ENCODE measurements at regions of chr11 and their contacts with region 1.

Region 1: GRCh38 chr11:73661035-73661628 is 14.8 kb downstream of the PLEKHB1 start:
- DNase-seq: peak; percentile 71 to 81 (median 76)
- H3K4me3 ChIP-seq: peak overlapping the region in 1 of 2 donors; percentile 34
- H3K4me3 Mint-ChIP-seq: peak overlapping the region in 5 of 8 donors; percentile 41 to 56 (median 51)
- H3K27ac ChIP-seq: no peak overlapping the region
- H3K27ac Mint-ChIP-seq: peak overlapping the region in 1 of 7 donors; percentile 77
- H3K4me1 ChIP-seq: peaks cover 13% of the 10 kb centered on the region
- H3K4me1 Mint-ChIP-seq: peaks cover 7 to 18% (median 10%) of the 10 kb centered on the region in 4 donors
- H3K27me3 ChIP-seq: no peaks in the 10 kb centered on the region
- H3K27me3 Mint-ChIP-seq: no peaks in the 10 kb centered on the region

Region 2: GRCh38 chr11:73307323-73308002 is 353.7 kb before region 1 on chr11:
- CTCF ChIA-PET with region 1: interaction called, 9 read pairs
- POLR2A ChIA-PET with region 1: no interaction called
- intact Hi-C with region 1: loop called (anchors 2 kb)
- DNase-seq: peak; percentile 82 to 87 (median 85)
- H3K4me3 ChIP-seq: peak overlapping the region; percentile 23 to 58
- H3K4me3 Mint-ChIP-seq: peak overlapping the region; percentile 84 to 96 (median 94)
- H3K27ac ChIP-seq: no peak overlapping the region
- H3K27ac Mint-ChIP-seq: peak overlapping the region in 6 of 7 donors; percentile 10 to 88 (median 54)
- H3K4me1 ChIP-seq: peaks cover 8% of the 10 kb centered on the region
- H3K4me1 Mint-ChIP-seq: peaks cover 6 to 18% (median 11%) of the 10 kb centered on the region in 4 donors
- H3K27me3 ChIP-seq: no peaks in the 10 kb centered on the region
- H3K27me3 Mint-ChIP-seq: peaks cover 7 to 19% of the 10 kb centered on the region in 2 donors

Region 3: DNA sequence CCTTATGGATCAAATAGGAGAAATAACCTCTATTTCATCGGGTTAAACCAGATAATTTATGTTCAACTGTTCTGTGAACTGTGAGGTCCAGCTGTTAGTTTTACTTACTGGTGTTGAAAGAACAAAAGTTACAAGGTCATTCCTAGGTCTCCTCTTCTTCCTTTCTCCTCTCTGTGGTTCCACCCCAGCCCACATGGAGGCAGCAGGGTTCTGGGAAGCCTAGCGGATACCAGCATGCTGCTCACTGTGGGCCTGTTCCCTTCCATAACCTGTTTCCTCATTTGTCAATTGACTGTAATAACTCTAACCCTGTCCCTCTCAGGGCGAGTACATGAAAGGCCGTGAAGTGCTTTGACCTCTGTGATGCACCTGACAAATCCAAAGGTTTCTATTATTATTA is 257.1 kb before region 1 on chr11:
- CTCF ChIA-PET with region 1: interaction called, 8 read pairs
- POLR2A ChIA-PET with region 1: no interaction called
- intact Hi-C with region 1: loop called (anchors 2 kb)
- DNase-seq: no peak
- H3K4me3 ChIP-seq: no peak overlapping the region
- H3K4me3 Mint-ChIP-seq: no peak overlapping the region
- H3K27ac ChIP-seq: no peak overlapping the region
- H3K27ac Mint-ChIP-seq: peak overlapping the region in 3 of 7 donors; percentile 52 to 81 (median 74)
- H3K4me1 ChIP-seq: no peaks in the 10 kb centered on the region
- H3K4me1 Mint-ChIP-seq: peaks cover 0 to 6% (median under 1%) of the 10 kb centered on the region in 4 donors
- H3K27me3 ChIP-seq: no peaks in the 10 kb centered on the region
- H3K27me3 Mint-ChIP-seq: no peaks in the 10 kb centered on the region

Region 4: DNA sequence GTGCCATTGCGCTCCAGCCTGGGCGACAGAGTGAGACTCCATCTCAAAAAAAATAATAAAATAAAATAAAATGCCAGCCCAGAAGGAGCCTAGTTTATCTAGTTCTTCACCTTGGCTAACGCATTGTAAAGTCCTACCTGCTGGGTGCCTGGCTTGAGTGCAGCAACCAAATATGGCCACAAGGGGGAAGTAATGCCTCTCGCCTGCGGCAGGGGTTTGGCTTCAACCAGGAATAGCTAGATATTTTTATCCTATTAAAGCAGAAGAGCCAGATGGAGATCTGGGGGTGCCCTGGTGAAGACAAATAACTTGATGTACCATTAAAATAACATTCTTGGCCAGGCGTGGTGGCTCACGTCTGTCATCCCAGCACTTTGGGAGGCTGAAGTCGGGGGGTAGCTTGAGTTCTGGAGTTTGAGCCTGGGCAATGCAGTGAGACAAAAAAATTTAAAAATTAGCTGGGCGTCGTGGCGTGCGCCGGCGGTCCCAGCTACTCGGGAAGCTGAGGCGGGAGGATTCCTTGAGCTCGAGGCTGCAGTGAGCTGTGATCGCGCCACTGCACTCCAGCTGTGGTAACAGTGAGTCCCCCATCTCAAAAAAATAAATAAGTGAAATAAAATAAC is 35.3 kb before region 1 on chr11:
- CTCF ChIA-PET with region 1: interaction called, 320 read pairs
- POLR2A ChIA-PET with region 1: interaction called, 15 read pairs
- intact Hi-C with region 1: loop called (anchors 1 kb)
- DNase-seq: peak; percentile 60 to 70 (median 66)
- H3K4me3 ChIP-seq: no peak overlapping the region
- H3K4me3 Mint-ChIP-seq: peak overlapping the region in 1 of 8 donors; percentile 24
- H3K27ac ChIP-seq: no peak overlapping the region
- H3K27ac Mint-ChIP-seq: no peak overlapping the region
- H3K4me1 ChIP-seq: no peaks in the 10 kb centered on the region
- H3K4me1 Mint-ChIP-seq: peaks cover 0 to 4% (median 0%) of the 10 kb centered on the region in 4 donors
- H3K27me3 ChIP-seq: no peaks in the 10 kb centered on the region
- H3K27me3 Mint-ChIP-seq: peaks cover 6 to 13% of the 10 kb centered on the region in 2 donors

Region 5: DNA sequence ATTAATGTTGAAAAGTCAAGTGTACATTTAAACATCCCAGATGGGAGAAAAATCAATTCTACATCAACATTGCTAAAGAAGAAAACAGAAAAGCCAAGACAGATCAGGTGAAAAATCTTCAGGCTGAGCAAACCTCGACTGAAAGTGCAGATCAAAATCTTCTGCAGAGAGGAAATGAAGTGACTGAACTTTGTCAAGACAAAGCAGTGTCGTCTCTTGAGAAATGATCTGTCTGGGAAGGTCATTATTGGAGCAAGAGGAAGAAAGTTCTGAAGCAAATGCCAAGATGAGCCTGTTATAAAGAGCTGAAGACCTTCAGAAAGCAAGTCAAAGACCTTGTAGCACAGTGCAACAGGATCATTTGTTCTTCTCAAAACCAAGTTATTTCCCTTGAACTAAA is 20.5 kb before region 1 on chr11:
- CTCF ChIA-PET with region 1: interaction called, 37 read pairs
- POLR2A ChIA-PET with region 1: no interaction called
- intact Hi-C with region 1: no loop called
- DNase-seq: no peak
- H3K4me3 ChIP-seq: no peak overlapping the region
- H3K4me3 Mint-ChIP-seq: no peak overlapping the region
- H3K27ac ChIP-seq: no peak overlapping the region
- H3K27ac Mint-ChIP-seq: peak overlapping the region in 2 of 7 donors; percentile 57 to 58
- H3K4me1 ChIP-seq: no peaks in the 10 kb centered on the region
- H3K4me1 Mint-ChIP-seq: peaks cover 3 to 8% (median 6%) of the 10 kb centered on the region in 4 donors
- H3K27me3 ChIP-seq: no peaks in the 10 kb centered on the region
- H3K27me3 Mint-ChIP-seq: peaks cover 0 to 4% of the 10 kb centered on the region in 2 donors

Region 6: DNA sequence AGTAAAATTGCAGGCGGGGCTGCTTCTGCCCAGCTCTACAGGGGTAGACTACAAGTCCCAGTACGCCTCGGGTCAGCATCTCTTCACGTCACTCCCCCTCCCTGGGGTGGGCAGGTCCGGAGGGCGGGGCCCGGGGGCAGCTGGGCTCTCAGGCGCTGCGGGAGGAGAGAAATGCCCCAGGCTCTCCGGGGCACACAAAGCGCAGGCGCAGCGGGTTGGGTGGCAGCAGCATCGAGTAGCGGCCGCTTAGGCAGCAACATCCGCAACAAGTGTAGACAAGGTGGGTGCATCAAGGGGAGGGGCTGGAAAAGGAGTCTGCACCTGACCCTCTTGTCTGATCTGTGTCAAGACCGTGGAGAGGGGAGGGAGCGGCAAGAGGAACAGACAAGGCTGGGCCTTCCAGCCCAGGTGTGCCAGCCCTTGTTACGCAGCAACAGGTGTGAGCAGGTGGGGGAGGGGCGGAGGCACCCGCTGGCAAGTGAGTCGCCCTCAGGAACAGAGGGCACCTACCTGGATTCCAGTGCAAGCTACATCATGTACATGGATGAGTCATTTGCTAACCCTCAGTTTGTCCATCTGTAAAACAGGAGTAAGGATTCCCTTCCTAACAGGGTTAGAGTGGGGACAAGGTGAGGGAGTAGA is 13.6 kb before region 1 on chr11:
- CTCF ChIA-PET with region 1: interaction called, 37 read pairs
- POLR2A ChIA-PET with region 1: interaction called, 3 read pairs
- intact Hi-C with region 1: loop called (anchors 1 kb)
- DNase-seq: peak; percentile 91 to 94 (median 93)
- H3K4me3 ChIP-seq: peak overlapping the region; percentile 54
- H3K4me3 Mint-ChIP-seq: peak overlapping the region; percentile 83 to 94 (median 91)
- H3K27ac ChIP-seq: peak overlapping the region; percentile 46
- H3K27ac Mint-ChIP-seq: peak overlapping the region; percentile 72 to 98 (median 96)
- H3K4me1 ChIP-seq: peaks cover 8% of the 10 kb centered on the region
- H3K4me1 Mint-ChIP-seq: peaks cover 9 to 24% (median 20%) of the 10 kb centered on the region in 4 donors
- H3K27me3 ChIP-seq: no peaks in the 10 kb centered on the region
- H3K27me3 Mint-ChIP-seq: no peaks in the 10 kb centered on the region

Region 7: DNA sequence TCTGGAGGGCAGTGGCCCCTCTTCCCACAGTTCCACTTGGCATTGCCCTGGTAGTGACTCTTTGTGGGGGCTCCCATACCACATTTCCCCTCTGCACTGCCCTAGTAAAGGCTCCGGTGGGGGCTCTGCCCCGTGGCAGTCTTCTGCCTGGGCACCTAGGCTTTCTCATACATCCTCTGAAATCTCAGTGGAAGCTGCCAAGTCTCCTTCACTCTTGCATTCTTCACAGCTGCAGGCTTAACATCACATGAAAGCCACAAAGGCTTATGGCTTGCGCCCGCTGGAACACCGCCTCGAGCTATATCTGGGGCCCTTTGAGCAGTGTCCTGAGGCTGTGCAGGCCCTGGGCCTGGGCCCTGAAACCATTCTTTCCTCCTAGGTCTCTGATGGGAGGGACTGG is 10.6 kb after region 1 on chr11:
- CTCF ChIA-PET with region 1: interaction called, 22 read pairs
- POLR2A ChIA-PET with region 1: no interaction called
- intact Hi-C with region 1: no loop called
- DNase-seq: no peak
- H3K4me3 ChIP-seq: no peak overlapping the region
- H3K4me3 Mint-ChIP-seq: no peak overlapping the region
- H3K27ac ChIP-seq: no peak overlapping the region
- H3K27ac Mint-ChIP-seq: no peak overlapping the region
- H3K4me1 ChIP-seq: no peaks in the 10 kb centered on the region
- H3K4me1 Mint-ChIP-seq: peaks cover 0 to 1% (median 0%) of the 10 kb centered on the region in 4 donors
- H3K27me3 ChIP-seq: no peaks in the 10 kb centered on the region
- H3K27me3 Mint-ChIP-seq: no peaks in the 10 kb centered on the region

Region 8: DNA sequence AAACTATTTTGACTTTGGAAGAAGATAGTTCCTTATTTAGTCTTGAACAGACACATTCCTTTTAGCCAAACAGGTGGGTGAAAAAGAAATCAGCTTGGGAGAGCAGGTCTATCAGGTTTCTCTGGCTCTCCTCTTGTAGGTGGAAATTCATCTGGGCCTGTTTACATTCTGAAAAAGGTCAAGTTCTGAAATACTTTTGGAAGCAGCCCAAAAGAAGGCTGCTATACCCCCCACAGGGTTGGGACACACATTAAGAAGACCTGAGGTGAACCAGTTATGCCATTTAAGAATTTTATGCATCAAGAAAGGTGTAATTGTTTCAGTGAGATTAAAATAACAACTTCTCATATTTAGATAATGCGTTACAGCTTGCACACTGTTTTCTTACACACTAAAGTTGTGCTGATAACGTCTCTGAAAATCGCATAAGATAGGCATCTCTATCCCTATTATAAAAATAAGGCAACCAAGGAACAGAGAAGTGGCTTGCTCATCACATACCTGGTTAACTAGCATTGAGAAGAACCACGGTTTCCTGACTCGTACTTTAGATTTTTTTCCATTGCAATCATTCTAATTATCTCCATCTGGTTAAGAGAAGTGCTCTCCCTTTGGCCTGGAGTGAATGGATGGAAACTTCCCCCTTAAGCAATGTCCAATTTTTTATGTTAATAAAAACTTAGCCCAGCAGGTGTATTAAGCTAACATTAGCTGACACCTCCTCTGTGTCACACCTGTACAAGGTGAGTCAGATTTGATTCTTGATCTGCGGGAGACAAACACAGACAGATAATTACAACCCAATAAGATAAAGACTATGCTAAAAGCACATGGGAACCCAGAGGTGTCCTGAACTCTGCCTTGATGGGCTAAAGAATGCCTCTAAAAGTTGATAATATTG is 408.3 kb after region 1 on chr11:
- CTCF ChIA-PET with region 1: no interaction called
- POLR2A ChIA-PET with region 1: no interaction called
- intact Hi-C with region 1: no loop called
- DNase-seq: no peak
- H3K4me3 ChIP-seq: no peak overlapping the region
- H3K4me3 Mint-ChIP-seq: no peak overlapping the region
- H3K27ac ChIP-seq: no peak overlapping the region
- H3K27ac Mint-ChIP-seq: peak overlapping the region in 1 of 7 donors; percentile 51
- H3K4me1 ChIP-seq: no peaks in the 10 kb centered on the region
- H3K4me1 Mint-ChIP-seq: peaks cover 0 to 9% (median 6%) of the 10 kb centered on the region in 4 donors
- H3K27me3 ChIP-seq: no peaks in the 10 kb centered on the region
- H3K27me3 Mint-ChIP-seq: no peaks in the 10 kb centered on the region

Region 9: DNA sequence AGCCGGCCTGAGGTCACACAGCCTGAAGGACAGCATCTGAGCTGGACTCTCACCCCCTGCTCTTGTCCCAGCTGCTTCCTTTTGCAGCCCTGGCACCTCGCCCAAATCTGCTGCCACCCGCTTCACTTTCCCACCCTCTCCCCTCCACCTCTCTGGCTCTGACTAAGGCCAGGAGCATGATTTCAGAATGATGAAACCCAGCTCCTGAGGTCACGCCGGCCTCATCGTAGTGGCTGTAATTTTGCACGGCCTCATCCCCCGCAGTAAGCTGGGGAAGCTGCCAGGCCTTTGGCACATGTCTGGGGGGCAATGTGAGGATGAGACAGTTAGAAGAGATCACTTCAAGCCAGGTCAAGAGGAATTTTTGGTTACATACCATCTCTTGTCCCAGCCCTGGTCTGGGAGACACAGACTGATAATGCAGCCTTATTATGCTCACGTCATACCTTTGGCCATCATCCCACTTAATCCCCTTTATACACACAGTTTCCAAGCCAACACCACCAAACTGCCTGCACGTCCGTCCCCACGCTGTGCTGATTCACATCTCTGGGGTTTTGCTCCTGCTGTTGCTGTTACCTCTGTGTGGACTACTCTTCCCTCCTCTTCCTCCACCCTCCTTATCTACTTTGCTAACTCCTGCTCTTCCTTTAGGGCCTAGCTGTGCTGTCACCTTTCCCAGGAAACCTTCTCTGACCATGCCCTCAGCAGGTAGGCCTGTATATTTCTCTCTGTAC is 1012.0 kb after region 1 on chr11:
- CTCF ChIA-PET with region 1: no interaction called
- POLR2A ChIA-PET with region 1: no interaction called
- intact Hi-C with region 1: no loop called
- DNase-seq: no peak
- H3K4me3 ChIP-seq: no peak overlapping the region
- H3K4me3 Mint-ChIP-seq: no peak overlapping the region
- H3K27ac ChIP-seq: no peak overlapping the region
- H3K27ac Mint-ChIP-seq: peak overlapping the region in 1 of 7 donors; percentile 4
- H3K4me1 ChIP-seq: no peaks in the 10 kb centered on the region
- H3K4me1 Mint-ChIP-seq: no peaks in the 10 kb centered on the region
- H3K27me3 ChIP-seq: no peaks in the 10 kb centered on the region
- H3K27me3 Mint-ChIP-seq: no peaks in the 10 kb centered on the region